Activated CD4-positive, alpha-beta memory T cell treated with anti-CD3 and anti-CD28 coated beads, Interleukin-2, amount 10 ng/mL, durations not matched to agents 7 days and 5 days (primary cell): ENCODE measurements at regions of chr17 and their contacts with region 1.

Region 1: GRCh38 chr17:40191237-40192208 is 14.3 kb downstream of the RAPGEFL1 start:
- DNase-seq: peak; percentile 75
- H3K4me3 Mint-ChIP-seq: peak overlapping the region; percentile 94
- H3K27ac Mint-ChIP-seq: no peak overlapping the region
- H3K4me1 Mint-ChIP-seq: peaks cover 15% of the 10 kb centered on the region
- H3K27me3 Mint-ChIP-seq: peaks cover 2% of the 10 kb centered on the region

Region 2: GRCh38 chr17:40018211-40019121 is 173.1 kb before region 1 on chr17:
- CTCF ChIA-PET with region 1: interaction called, 10 read pairs
- POLR2A ChIA-PET with region 1: no interaction called
- DNase-seq: no peak
- H3K4me3 Mint-ChIP-seq: no peak overlapping the region
- H3K27ac Mint-ChIP-seq: no peak overlapping the region
- H3K4me1 Mint-ChIP-seq: peaks cover 4% of the 10 kb centered on the region
- H3K27me3 Mint-ChIP-seq: no peaks in the 10 kb centered on the region

Region 3: DNA sequence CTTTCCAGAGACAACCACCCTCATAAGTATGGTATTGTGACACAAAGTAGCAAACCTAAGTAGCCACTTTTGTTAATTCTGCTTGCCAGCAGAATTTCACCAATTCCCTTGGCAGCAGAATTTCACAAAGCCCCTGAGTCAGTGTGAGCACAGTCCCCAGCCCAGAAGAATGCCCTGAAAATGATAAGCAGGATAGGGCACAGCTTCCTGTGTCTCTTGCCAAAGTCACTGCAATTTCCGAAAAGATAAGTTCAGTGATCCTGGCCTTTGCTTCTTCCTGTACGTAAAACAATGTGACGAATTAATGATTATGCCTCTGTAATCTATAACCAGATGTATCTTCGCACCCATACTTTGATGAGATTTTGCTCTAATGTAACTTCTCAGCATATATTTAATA is 11.6 kb after region 1 on chr17:
- CTCF ChIA-PET with region 1: interaction called, 16 read pairs
- POLR2A ChIA-PET with region 1: interaction called, 3 read pairs
- DNase-seq: no peak
- H3K4me3 Mint-ChIP-seq: no peak overlapping the region
- H3K27ac Mint-ChIP-seq: no peak overlapping the region
- H3K4me1 Mint-ChIP-seq: peaks cover 5% of the 10 kb centered on the region
- H3K27me3 Mint-ChIP-seq: peaks cover 11% of the 10 kb centered on the region

Region 4: DNA sequence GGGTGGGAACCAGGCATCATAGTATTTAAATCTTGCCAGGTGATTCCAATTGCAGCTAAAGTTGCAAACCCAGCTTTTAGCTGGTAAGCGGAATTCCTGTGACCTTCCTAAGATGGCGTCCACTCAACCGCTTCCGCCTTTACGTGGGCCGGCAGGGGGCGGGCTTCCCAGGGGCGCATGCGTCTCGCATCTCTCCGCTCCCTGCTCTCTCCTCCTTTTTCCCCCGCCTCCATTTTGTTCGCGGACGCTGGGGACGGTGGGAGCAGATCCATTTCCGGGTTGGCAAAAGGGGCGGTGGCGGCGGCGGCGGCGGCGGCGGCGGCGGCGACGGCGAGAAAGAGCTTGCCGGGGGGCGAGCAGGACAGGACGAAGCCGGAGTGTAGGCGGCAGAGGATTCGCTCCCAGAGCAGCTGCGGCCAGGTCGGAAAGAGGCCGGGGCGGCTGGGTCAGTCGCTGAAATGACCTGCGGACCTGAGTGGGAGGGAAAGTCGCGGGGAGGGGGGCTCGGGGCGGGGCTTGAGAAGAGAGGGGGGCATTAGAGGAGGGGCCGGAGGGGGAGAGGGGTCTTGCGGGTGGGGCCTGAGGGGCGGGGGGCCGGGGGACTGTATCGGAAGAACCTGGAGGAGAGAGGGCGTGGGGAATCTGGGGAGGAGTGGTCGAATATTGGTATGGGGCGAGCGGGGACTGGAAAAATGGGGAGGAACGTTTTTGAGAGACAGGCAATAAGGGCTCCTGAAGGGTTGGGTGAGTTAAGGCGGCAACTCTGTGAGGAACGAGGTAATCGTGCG is 27.7 kb after region 1 on chr17 and contains the start of gene WIPF2:
- CTCF ChIA-PET with region 1: interaction called, 20 read pairs
- POLR2A ChIA-PET with region 1: interaction called, 13 read pairs
- DNase-seq: peak; percentile 97
- H3K4me3 Mint-ChIP-seq: peak within 1 kb of the TSS; percentile 90
- H3K27ac Mint-ChIP-seq: peak within 1 kb of the TSS; percentile 100
- H3K4me1 Mint-ChIP-seq: peaks cover 32% of the 10 kb centered on the region
- H3K27me3 Mint-ChIP-seq: no peaks in the 10 kb centered on the region
- total RNA-seq, gene WIPF2: 26.0 TPM